ENCODE measurements at regions of chr22 and their contacts with region 1.

Region 1: DNA sequence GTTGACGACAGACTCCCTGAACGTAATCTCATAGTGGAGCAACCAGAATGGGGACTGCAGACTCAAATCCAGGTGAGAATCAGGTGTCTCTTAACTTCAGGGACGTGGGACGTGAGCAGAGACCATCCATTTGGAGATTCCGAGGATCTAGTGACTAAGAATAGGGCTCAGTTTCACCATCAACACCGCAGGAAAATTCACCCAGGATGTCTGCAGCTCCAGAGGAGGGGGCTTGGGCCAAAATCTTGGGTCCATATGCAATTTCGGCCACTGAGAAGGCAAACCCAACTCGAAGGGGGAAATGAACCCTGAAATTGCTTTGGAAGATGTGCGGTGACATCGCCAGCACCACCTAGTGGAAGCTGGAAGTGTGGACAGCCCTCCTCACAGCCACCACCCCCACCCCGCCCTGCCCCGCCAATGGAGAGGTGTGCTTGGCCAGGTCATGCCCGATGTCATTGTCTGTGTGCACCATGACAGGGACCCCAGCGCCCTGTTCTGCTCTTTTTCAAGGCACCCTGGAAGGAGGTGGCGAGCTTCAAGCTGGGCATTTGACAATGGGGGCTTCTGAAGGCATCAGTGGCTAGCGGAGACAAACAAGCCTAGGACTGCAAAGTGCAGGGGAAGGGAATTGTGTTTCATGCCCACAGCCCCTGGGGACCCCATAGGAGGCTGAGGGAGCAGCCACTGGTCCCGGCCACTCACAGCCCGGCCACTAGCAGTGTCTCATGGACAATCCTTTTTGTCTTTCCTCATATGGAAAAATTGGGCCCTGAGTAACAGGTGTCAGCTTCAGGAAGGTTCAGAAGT is 24.8 kb downstream of the APOL1 start:
- DNase-seq: peak; percentile 45 to 84 (median 58)
- ATAC-seq: peak; percentile 82
- H3K4me3 ChIP-seq: no peak overlapping the region
- H3K4me3 Mint-ChIP-seq: no peak overlapping the region
- H3K27ac ChIP-seq: peak overlapping the region in 1 of 2 donors; percentile 23
- H3K27ac Mint-ChIP-seq: peak overlapping the region; percentile 64
- H3K4me1 ChIP-seq: peaks cover 11% of the 10 kb centered on the region
- H3K4me1 Mint-ChIP-seq: peaks cover 17% of the 10 kb centered on the region
- H3K27me3 ChIP-seq: no peaks in the 10 kb centered on the region
- H3K27me3 Mint-ChIP-seq: no peaks in the 10 kb centered on the region
- CTCF ChIP-seq: peak; percentile 72

Region 2: GRCh38 chr22:36194971-36195370 is 82.7 kb before region 1 on chr22:
- CTCF ChIA-PET with region 1: interaction called, 4 read pairs
- POLR2A ChIA-PET with region 1: interaction called, 3 read pairs
- intact Hi-C with region 1: loop called (anchors 1 to 10 kb)
- DNase-seq: peak in 13 of 14 experiments; percentile 6 to 64 (median 23)
- ATAC-seq: peak; percentile 39
- H3K4me3 ChIP-seq: no peak overlapping the region
- H3K4me3 Mint-ChIP-seq: no peak overlapping the region
- H3K27ac ChIP-seq: no peak overlapping the region
- H3K27ac Mint-ChIP-seq: no peak overlapping the region
- H3K4me1 ChIP-seq: peaks cover 9% of the 10 kb centered on the region
- H3K4me1 Mint-ChIP-seq: peaks cover 6% of the 10 kb centered on the region
- H3K27me3 ChIP-seq: no peaks in the 10 kb centered on the region
- H3K27me3 Mint-ChIP-seq: peaks cover 18% of the 10 kb centered on the region
- CTCF ChIP-seq: peak; percentile 53

Region 3: GRCh38 chr22:36239401-36240171 is 38.1 kb before region 1 on chr22 and contains the start of gene APOL2:
- CTCF ChIA-PET with region 1: interaction called, 11 read pairs
- POLR2A ChIA-PET with region 1: interaction called, 8 read pairs
- intact Hi-C with region 1: loop called in 1 of 2 experiments (anchors 5 kb)
- DNase-seq: peak; percentile 69 to 94 (median 84)
- ATAC-seq: peak; percentile 98
- H3K4me3 ChIP-seq: peak within 1 kb of the TSS; percentile 89
- H3K4me3 Mint-ChIP-seq: peak within 1 kb of the TSS; percentile 87
- H3K27ac ChIP-seq: peak within 1 kb of the TSS; percentile 67 to 79
- H3K27ac Mint-ChIP-seq: peak within 1 kb of the TSS; percentile 90
- H3K4me1 ChIP-seq: peaks cover 47% of the 10 kb centered on the region
- H3K4me1 Mint-ChIP-seq: peaks cover 49% of the 10 kb centered on the region
- H3K27me3 ChIP-seq: no peaks in the 10 kb centered on the region
- H3K27me3 Mint-ChIP-seq: no peaks in the 10 kb centered on the region
- CTCF ChIP-seq: peak; percentile 60
- total RNA-seq, gene APOL2: 17.8 to 21.8 TPM

Region 4: GRCh38 chr22:36317658-36318271 is 40.1 kb after region 1 on chr22:
- CTCF ChIA-PET with region 1: no interaction called
- POLR2A ChIA-PET with region 1: no interaction called
- intact Hi-C with region 1: no loop called
- DNase-seq: no peak
- ATAC-seq: no peak
- H3K4me3 ChIP-seq: no peak overlapping the region
- H3K4me3 Mint-ChIP-seq: no peak overlapping the region
- H3K27ac ChIP-seq: no peak overlapping the region
- H3K27ac Mint-ChIP-seq: peak overlapping the region; percentile 61
- H3K4me1 ChIP-seq: no peaks in the 10 kb centered on the region
- H3K4me1 Mint-ChIP-seq: no peaks in the 10 kb centered on the region
- H3K27me3 ChIP-seq: no peaks in the 10 kb centered on the region
- H3K27me3 Mint-ChIP-seq: no peaks in the 10 kb centered on the region
- CTCF ChIP-seq: no peak